Right ventricle myocardium inferior (tissue), 1 donor: ENCODE measurements at regions of chr19 and their contacts with region 1.

Region 1: GRCh38 chr19:33406521-33407139 is 33.1 kb downstream of the CEBPG start:
- DNase-seq: peak; percentile 81
- ATAC-seq: peak; percentile 73

Region 2: GRCh38 chr19:33143897-33144405 is 262.7 kb before region 1 on chr19:
- intact Hi-C with region 1: loop called (anchors 10 kb)
- DNase-seq: peak; percentile 76
- ATAC-seq: peak; percentile 93

Region 3: DNA sequence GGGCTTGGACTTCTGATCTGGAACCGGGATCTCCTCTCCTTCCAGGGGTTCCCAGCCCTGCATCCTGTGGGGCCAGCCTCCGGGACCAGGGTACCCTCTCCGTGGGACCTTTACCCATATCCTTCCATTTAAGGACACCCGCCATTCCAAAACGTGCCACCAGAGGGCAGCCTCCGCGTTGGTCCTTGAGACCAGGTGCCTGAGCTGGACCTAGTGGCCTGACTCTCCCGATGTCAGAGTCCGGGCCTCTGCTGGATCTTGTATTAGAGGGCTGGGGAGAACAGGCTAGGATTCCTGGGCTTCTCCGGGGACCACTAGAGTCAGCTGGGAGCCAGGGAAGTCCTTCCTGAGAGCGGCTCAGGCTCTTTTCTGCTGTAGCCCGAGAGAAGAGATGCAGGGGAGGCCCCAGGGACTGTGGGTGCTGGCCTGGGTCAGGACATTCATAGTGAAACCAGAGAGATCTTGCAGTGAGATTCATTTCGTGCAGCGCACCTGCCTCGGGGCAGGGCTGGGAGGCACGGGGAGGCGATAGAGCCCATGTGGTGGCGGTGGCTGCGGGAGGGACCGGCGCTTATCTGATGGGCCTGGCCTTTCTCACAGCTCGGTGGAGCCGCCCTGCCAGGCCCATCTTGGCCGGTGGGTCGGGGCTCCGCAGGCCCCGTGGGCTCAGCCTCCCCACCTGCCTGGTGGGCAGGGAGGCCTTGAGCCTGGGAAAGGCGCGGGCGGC is 171.2 kb before region 1 on chr19:
- intact Hi-C with region 1: loop called (anchors 1 kb)
- DNase-seq: peak; percentile 90
- ATAC-seq: peak; percentile 56

Region 4: GRCh38 chr19:33302175-33302973 is 104.3 kb before region 1 on chr19 and contains the start of gene CEBPA:
- intact Hi-C with region 1: loop called (anchors 5 kb)
- DNase-seq: peak; percentile 95
- ATAC-seq: peak; percentile 91
- total RNA-seq, gene CEBPA: 4.9 TPM

Region 5: DNA sequence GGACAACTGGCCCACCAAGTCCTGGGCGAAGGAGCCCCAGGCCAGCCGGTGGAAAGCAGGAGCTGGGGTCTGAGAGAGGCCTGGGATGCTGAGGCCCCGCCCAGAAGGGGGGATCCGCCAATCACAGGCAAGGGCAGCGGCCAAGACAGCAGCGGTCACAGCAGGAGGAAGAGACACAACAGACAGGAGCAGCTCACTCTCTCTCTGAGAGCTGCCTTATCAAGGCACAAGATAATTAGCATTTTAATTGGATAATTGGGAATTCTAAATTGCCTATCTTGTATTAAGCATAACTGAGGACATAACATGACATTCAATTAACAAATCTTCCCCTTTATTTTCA is 13.1 kb after region 1 on chr19:
- intact Hi-C with region 1: no loop called
- DNase-seq: no peak
- ATAC-seq: no peak